GM12878 (cell line): ENCODE measurements at regions of chr1 and their contacts with region 1.

Region 1: GRCh38 chr1:111747282-111747734 is 8.1 kb upstream of the INKA2 start:
- DNase-seq: no peak
- ATAC-seq: peak; percentile 94
- H3K4me3 ChIP-seq: no peak overlapping the region
- H3K27ac ChIP-seq: no peak overlapping the region
- H3K4me1 ChIP-seq: no peaks in the 10 kb centered on the region; the same call in 1 of the 2 replicates
- H3K27me3 ChIP-seq: peaks cover 0 to 1% of the 10 kb centered on the region in 2 experiments; a peak in 1 of 4 replicates
- CTCF ChIP-seq: peak; percentile 63 to 88 (median 65)
- EP300 ChIP-seq: no peak
- POLR2A ChIP-seq: no peak
- RAD21 ChIP-seq: peak; percentile 62

Region 2: DNA sequence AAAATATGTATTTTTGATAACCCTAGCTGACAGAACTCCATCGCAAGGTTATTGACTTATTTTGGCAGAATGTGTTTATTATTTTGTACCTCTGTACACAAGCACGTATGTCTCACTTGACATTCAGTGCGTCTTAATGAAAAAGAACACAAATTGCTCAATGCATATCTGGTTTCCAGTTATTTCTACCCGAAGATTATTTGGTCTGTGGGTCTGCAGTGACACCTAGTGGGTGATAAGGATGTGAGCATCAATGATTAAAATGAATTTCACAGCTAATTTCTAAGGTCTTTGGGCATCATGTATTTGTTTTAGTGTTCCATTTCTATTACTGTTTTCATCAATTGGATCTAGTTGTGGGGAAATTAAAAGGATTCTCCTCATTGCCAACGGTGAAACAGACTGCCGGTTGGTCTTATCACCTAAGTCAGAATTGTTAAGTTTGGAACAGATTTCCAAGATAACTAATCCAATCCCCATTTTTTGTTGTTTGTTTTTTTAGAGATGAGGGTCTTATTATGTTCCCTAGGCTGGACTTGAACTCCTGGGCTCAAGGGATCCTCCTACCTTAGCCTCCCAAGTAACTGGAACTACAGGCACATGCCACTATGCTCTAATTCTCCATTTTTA is 22.3 kb after region 1 on chr1:
- CTCF ChIA-PET with region 1: interaction called, 21 read pairs
- POLR2A ChIA-PET with region 1: no interaction called
- RAD21 ChIA-PET with region 1: interaction called, 7 read pairs
- SMC1A ChIA-PET with region 1: interaction called, 20 read pairs
- in situ Hi-C with region 1: no loop called
- intact Hi-C with region 1: no loop called
- DNase-seq: peak; percentile 44
- ATAC-seq: peak; percentile 79
- H3K4me3 ChIP-seq: no peak overlapping the region
- H3K27ac ChIP-seq: no peak overlapping the region
- H3K4me1 ChIP-seq: no peaks in the 10 kb centered on the region
- H3K27me3 ChIP-seq: no peaks in the 10 kb centered on the region
- CTCF ChIP-seq: peak; percentile 66 to 87 (median 78)
- EP300 ChIP-seq: no peak
- POLR2A ChIP-seq: no peak
- RAD21 ChIP-seq: peak; percentile 92